ENCODE measurements at regions of chr2 and their contacts with region 1.

Region 1: GRCh38 chr2:101252408-101253012 is at the start of gene CNOT11:
- DNase-seq: peak; percentile 99
- ATAC-seq: peak; percentile 88
- H3K4me3 Mint-ChIP-seq: peak within 1 kb of the TSS; percentile 89
- H3K27ac Mint-ChIP-seq: peak within 1 kb of the TSS; percentile 96
- H3K4me1 Mint-ChIP-seq: peaks cover 45% of the 10 kb centered on the region
- H3K27me3 Mint-ChIP-seq: no peaks in the 10 kb centered on the region
- total RNA-seq, gene CNOT11: 64.4 to 64.7 TPM

Region 2: GRCh38 chr2:101001691-101002561 is 250.6 kb before region 1 on chr2 and contains the start of gene RPL31:
- CTCF ChIA-PET with region 1: interaction called, 3 read pairs
- POLR2A ChIA-PET with region 1: interaction called, 14 read pairs
- DNase-seq: peak; percentile 98
- ATAC-seq: peak; percentile 95
- H3K4me3 Mint-ChIP-seq: peak within 1 kb of the TSS; percentile 94
- H3K27ac Mint-ChIP-seq: peak within 1 kb of the TSS; percentile 96
- H3K4me1 Mint-ChIP-seq: peaks cover 44% of the 10 kb centered on the region
- H3K27me3 Mint-ChIP-seq: peaks cover 3% of the 10 kb centered on the region
- total RNA-seq, gene RPL31: 1,300 to 1,339 TPM

Region 3: GRCh38 chr2:101012706-101013181 is 239.8 kb before region 1 on chr2:
- CTCF ChIA-PET with region 1: interaction called, 14 read pairs
- POLR2A ChIA-PET with region 1: interaction called, 3 read pairs
- DNase-seq: peak; percentile 54
- ATAC-seq: no peak
- H3K4me3 Mint-ChIP-seq: no peak overlapping the region
- H3K27ac Mint-ChIP-seq: no peak overlapping the region
- H3K4me1 Mint-ChIP-seq: peaks cover 18% of the 10 kb centered on the region
- H3K27me3 Mint-ChIP-seq: no peaks in the 10 kb centered on the region

Region 4: DNA sequence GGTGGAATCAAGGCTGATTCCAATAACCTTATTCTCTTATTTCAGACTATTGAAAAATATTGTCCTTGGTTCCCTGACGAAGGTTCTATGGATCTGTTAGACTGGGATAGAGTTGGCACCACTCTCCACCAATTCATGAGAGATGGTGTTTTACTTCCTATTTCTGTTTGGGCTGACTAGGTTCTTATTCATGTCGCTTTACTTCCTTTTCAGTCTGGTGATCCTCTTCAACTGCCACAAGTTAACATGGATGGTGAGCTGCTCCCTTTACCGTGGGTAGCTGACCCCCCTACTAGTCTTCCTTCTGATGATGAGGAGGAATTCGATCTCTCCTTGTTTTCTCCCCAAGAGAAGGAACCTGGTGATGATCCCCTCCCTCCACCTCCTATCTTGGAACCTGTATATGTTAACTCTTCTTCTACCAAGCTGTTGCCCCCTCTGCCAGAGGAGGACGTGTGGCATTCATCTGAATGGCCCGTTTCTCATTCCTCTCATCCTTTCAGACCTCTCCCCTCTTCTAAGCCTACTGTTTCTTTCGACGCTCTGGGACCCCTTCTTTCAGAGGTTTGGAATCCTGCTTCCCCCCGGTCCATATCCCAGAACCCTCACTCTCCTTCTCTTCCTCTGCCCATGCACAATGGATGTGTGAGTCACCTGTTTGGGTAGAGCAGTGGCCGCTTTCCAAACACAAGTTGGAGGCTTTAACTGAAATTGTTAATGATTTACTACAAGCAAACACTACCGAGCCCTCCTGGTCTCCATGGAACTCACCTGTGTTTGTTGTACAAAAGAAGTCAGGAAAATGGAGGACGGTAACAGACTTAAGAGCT is 13.4 kb before region 1 on chr2:
- CTCF ChIA-PET with region 1: interaction called, 24 read pairs
- POLR2A ChIA-PET with region 1: no interaction called
- DNase-seq: no peak
- ATAC-seq: no peak
- H3K4me3 Mint-ChIP-seq: no peak overlapping the region
- H3K27ac Mint-ChIP-seq: no peak overlapping the region
- H3K4me1 Mint-ChIP-seq: peaks cover 4% of the 10 kb centered on the region
- H3K27me3 Mint-ChIP-seq: peaks cover 4% of the 10 kb centered on the region

Region 5: DNA sequence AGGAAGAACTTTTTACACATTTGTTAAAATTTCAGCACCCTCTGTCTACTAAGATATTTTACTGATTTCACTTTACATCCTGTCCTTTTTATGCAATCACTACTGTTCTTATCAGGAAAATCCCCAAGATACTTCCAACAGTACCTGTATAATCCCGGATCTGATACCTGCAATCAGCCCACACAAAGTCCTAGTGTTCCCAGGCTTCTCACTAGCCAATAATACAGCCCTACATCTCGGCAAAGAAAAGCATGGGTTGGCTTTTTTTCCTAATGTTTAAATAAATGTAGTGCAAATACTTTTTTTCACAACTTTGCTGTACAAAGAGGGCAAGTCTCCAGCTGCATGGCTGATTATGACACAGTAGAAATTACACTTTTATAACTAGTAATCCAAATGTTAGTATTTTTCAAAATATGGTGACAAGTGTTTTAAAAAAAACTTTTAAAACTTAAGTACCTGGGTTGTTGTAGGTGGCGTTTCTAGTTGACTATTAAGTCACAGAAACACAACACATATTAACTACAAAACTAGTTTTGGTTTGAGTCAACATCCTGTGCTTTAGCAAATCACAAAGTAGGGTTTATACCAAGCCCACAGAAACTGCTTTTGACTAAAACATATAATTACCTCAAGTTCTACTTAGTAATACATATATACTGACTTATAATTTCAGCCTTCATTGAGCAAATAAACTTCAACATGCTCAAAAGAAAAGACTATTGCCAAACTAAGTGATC is 19.7 kb after region 1 on chr2:
- CTCF ChIA-PET with region 1: interaction called, 6 read pairs
- POLR2A ChIA-PET with region 1: interaction called, 34 read pairs
- DNase-seq: no peak
- ATAC-seq: peak; percentile 85
- H3K4me3 Mint-ChIP-seq: peak overlapping the region; percentile 15
- H3K27ac Mint-ChIP-seq: peak overlapping the region; percentile 83
- H3K4me1 Mint-ChIP-seq: peaks cover 56% of the 10 kb centered on the region
- H3K27me3 Mint-ChIP-seq: no peaks in the 10 kb centered on the region

Region 6: GRCh38 chr2:101308432-101309210 is 56.1 kb after region 1 on chr2 and contains the start of gene RNF149:
- CTCF ChIA-PET with region 1: interaction called, 5 read pairs
- POLR2A ChIA-PET with region 1: interaction called, 16 read pairs
- DNase-seq: peak; percentile 92
- ATAC-seq: peak; percentile 73
- H3K4me3 Mint-ChIP-seq: peak within 1 kb of the TSS; percentile 93
- H3K27ac Mint-ChIP-seq: peak within 1 kb of the TSS; percentile 94
- H3K4me1 Mint-ChIP-seq: peaks cover 66% of the 10 kb centered on the region
- H3K27me3 Mint-ChIP-seq: no peaks in the 10 kb centered on the region
- total RNA-seq, gene RNF149: 64.2 to 71.5 TPM

Measured in activated CD8-positive, alpha-beta T cell treated with anti-CD3 and anti-CD28 coated beads, Interleukin-2, amount 10 ng/mL, durations not matched to agents 7 days and 5 days (primary cell).